Heart right ventricle (tissue), 16 donors: ENCODE measurements at regions of chrX and their contacts with region 1.

Region 1: GRCh38 chrX:16436348-16437188 is 213.4 kb upstream of the S100G start:
- DNase-seq: peak; percentile 30 to 67
- ATAC-seq: peak; percentile 61 to 88 (median 82)
- H3K4me3 ChIP-seq: no peak overlapping the region
- H3K27ac ChIP-seq: no peak overlapping the region
- H3K4me1 ChIP-seq: no peaks in the 10 kb centered on the region
- H3K27me3 ChIP-seq: peaks cover 0 to 43% (median 0%) of the 10 kb centered on the region in 7 donors
- CTCF ChIP-seq: peak; percentile 12 to 76 (median 61)

Region 2: DNA sequence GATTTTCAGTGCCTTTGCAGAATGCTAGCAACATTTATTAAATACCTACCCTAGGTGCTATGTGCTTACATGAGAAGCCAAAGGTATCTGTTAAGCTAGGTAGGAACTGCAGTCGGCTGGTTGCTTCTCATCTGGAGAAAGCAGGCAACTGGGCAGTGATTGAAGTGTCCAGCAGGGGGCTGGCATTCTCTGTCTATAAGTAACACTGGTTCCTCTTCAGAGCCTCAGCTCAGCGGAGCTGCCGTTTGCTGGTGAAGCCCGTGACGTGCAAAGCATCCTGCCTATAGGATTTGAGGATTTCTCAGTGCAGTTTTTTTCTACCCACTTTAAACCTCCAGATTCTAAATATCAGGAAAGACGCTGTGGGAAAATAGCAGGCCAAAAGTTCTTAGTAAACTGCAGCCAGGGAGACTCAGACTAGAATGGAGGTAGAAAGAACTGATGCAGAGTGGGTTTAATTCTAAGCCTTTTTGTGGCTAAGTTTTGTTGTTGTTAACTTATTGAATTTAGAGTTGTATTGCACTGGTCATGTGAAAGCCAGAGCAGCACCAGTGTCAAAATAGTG is 313.3 kb before region 1 on chrX and contains the start of gene GRPR:
- intact Hi-C with region 1: loop called in 1 of 10 experiments (anchors 10 kb)
- DNase-seq: peak; percentile 52 to 64
- ATAC-seq: peak; percentile 70 to 93 (median 80)
- H3K4me3 ChIP-seq: no peak within 1 kb of the TSS
- H3K27ac ChIP-seq: no peak within 1 kb of the TSS
- H3K4me1 ChIP-seq: peaks cover 0 to 3% (median 0%) of the 10 kb centered on the region in 9 donors
- H3K27me3 ChIP-seq: peaks cover 0 to 62% (median 0%) of the 10 kb centered on the region in 7 donors
- CTCF ChIP-seq: peak; percentile 39 to 85 (median 64)
- total RNA-seq, gene GRPR: 0.15 to 0.57 (median 0.30) TPM

Region 3: DNA sequence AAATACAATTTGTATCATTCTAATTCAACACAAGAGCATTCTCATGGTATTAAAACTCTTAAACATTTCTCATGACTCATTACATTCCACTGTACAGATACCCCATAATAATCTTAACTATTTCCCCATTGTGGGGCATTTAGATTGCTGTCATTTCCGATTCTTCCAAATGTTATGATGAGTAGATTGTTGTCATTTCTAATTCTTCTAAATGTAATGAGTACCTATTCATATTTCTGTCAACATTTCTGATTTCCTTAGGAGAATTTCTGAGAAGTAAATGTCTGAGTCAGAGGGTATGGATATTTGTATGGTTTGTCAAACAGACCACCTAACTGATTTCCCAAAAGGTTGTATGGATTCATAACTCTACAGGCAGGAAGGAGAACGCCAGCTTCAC is 221.7 kb after region 1 on chrX:
- intact Hi-C with region 1: loop called in 6 of 10 experiments (anchors 10 kb)
- DNase-seq: no peak
- ATAC-seq: no peak
- H3K4me3 ChIP-seq: no peak overlapping the region
- H3K27ac ChIP-seq: no peak overlapping the region
- H3K4me1 ChIP-seq: no peaks in the 10 kb centered on the region
- H3K27me3 ChIP-seq: peaks cover 0 to 43% (median 0%) of the 10 kb centered on the region in 7 donors
- CTCF ChIP-seq: no peak

Region 4: DNA sequence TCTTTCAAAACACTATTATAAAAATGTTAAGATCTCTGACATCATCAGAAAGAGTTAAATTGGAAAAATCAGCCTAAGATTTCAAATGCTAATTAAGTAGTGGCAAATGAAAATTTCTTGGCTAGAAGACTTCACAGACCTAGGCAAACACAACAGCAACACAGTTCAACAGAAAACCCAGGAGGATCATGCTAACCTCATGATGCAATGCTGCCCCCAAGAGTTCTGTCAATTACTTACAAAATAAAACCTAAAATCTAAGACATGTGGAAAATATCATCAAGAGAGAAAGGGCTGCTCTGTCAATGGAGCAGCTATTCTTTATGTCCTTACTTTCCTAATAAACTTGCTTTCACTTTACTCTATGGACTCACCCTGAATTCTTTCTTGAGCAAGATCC is 234.4 kb after region 1 on chrX:
- intact Hi-C with region 1: loop called in 6 of 10 experiments (anchors 5 to 10 kb)
- DNase-seq: no peak
- ATAC-seq: no peak
- H3K4me3 ChIP-seq: no peak overlapping the region
- H3K27ac ChIP-seq: no peak overlapping the region
- H3K4me1 ChIP-seq: no peaks in the 10 kb centered on the region
- H3K27me3 ChIP-seq: peaks cover 0 to 32% (median 0%) of the 10 kb centered on the region in 7 donors
- CTCF ChIP-seq: peak in 7 of 9 donors; percentile 14 to 48 (median 40)